SK-N-SH (cell line): ENCODE measurements at regions of chr17 and their contacts with region 1.

Region 1: DNA sequence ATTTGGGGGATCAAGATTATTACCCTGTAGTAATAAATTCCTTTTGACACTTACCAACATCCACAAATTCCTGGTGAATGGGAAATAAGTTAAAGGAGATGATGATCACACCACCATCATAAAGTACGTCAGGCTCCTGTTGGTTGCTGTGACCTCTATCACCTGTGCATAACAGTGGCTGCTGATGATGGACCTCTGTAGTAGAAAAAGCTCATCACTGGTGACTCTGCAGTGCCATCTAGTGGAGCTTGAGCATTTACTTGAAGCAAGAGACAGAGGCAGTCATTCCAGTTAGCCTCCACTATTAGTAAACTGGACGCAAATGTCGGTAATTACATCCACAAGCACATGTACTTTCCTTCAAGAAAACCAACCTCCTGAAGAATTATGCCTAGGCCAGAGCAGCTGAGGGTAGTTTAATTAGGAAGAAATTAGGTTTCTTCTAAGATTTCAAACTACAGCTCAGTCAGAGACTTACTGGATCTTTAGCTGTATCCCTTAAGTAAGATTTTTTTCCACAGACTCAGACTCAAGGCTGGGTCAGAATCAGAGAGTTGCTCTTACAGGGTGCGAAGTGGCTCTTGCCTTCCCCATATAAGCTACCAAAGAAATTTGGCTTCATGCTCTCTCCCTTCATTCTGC is 39.3 kb downstream of the CYB561 start:
- DNase-seq: peak; percentile 82
- H3K4me3 ChIP-seq: no peak overlapping the region
- H3K27ac ChIP-seq: peak overlapping the region; percentile 76 to 84
- H3K4me1 ChIP-seq: peaks cover 17 to 21% of the 10 kb centered on the region in 2 experiments
- H3K27me3 ChIP-seq: no peaks in the 10 kb centered on the region
- CTCF ChIP-seq: peak; percentile 99
- EP300 ChIP-seq: no peak; a peak in 1 of 4 replicates
- RAD21 ChIP-seq: peak; percentile 99

Region 2: GRCh38 chr17:62981928-62982327 is 424.9 kb before region 1 on chr17:
- CTCF ChIA-PET with region 1: interaction called, 14 read pairs
- POLR2A ChIA-PET with region 1: no interaction called
- DNase-seq: no peak
- H3K4me3 ChIP-seq: no peak overlapping the region
- H3K27ac ChIP-seq: no peak overlapping the region
- H3K4me1 ChIP-seq: peaks cover 0 to 10% of the 10 kb centered on the region in 2 experiments; a peak in 1 of 4 replicates
- H3K27me3 ChIP-seq: no peaks in the 10 kb centered on the region
- CTCF ChIP-seq: no peak
- EP300 ChIP-seq: no peak
- RAD21 ChIP-seq: no peak

Region 3: DNA sequence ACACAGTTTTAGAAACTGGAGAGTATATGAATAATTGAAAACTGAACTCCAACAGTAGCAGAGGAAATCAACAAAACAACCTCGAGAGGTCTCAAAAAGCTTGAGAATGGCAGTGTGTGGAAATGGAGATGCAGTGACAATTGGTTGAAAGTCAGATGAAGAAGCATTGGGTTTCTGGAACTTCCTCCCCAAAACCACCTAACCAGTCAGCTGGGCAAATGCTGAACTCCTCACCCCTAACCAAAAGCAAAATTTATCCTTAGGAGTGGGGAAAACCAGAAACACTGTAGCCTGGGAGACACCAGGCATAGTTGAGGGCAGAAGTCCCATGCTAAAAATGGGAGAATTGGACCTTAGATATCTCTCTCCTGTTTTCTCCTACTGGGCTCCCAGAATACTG is 330.8 kb before region 1 on chr17:
- CTCF ChIA-PET with region 1: interaction called, 98 read pairs
- POLR2A ChIA-PET with region 1: no interaction called
- DNase-seq: no peak
- H3K4me3 ChIP-seq: no peak overlapping the region
- H3K27ac ChIP-seq: no peak overlapping the region
- H3K4me1 ChIP-seq: peaks cover 5 to 9% of the 10 kb centered on the region in 2 experiments; a peak in 3 of 4 replicates
- H3K27me3 ChIP-seq: no peaks in the 10 kb centered on the region
- CTCF ChIP-seq: no peak
- EP300 ChIP-seq: no peak
- RAD21 ChIP-seq: no peak

Region 4: GRCh38 chr17:63150994-63151464 is 255.8 kb before region 1 on chr17:
- CTCF ChIA-PET with region 1: interaction called, 17 read pairs
- POLR2A ChIA-PET with region 1: no interaction called
- DNase-seq: peak; percentile 40
- H3K4me3 ChIP-seq: peak overlapping the region; percentile 18 to 36; a peak in 3 of 4 replicates
- H3K27ac ChIP-seq: peak overlapping the region; percentile 95
- H3K4me1 ChIP-seq: peaks cover 43 to 66% of the 10 kb centered on the region in 2 experiments
- H3K27me3 ChIP-seq: no peaks in the 10 kb centered on the region
- CTCF ChIP-seq: no peak
- EP300 ChIP-seq: peak in 1 of 2 experiments; percentile 20; a peak in 1 of 4 replicates
- RAD21 ChIP-seq: no peak

Region 5: GRCh38 chr17:63365366-63366240 is 41.2 kb before region 1 on chr17:
- CTCF ChIA-PET with region 1: interaction called, 10 read pairs
- POLR2A ChIA-PET with region 1: no interaction called
- DNase-seq: no peak
- H3K4me3 ChIP-seq: no peak overlapping the region
- H3K27ac ChIP-seq: peak overlapping the region; percentile 78 to 84
- H3K4me1 ChIP-seq: peaks cover 9 to 46% of the 10 kb centered on the region in 2 experiments
- H3K27me3 ChIP-seq: no peaks in the 10 kb centered on the region
- CTCF ChIP-seq: no peak
- EP300 ChIP-seq: peak; percentile 21 to 85; a peak in 3 of 4 replicates
- RAD21 ChIP-seq: 0 out of 2 replicates have a peak, but pooled peaks have one; percentile 4

Region 6: DNA sequence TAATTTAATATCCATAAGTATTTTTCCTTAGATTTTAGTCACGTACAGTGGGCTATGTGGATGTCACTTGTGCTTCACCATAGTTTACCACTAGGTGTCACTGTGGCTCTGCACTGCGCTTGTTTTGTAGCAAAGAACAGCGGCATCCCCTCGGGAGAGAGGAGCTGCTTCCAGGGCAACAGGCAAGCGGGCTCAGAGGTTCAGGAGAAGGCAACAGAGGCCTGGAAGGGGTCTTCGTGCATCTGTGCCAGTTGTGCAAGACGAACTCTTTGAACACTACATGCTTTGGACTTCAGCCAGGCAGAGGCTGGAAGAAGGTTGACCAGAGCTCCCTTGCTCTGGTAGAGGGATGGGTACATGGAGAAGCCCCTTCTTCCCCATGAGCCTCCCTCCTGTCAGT is 18.7 kb after region 1 on chr17:
- CTCF ChIA-PET with region 1: interaction called, 68 read pairs
- POLR2A ChIA-PET with region 1: no interaction called
- DNase-seq: peak; percentile 90
- H3K4me3 ChIP-seq: no peak overlapping the region; a peak in 1 of 4 replicates
- H3K27ac ChIP-seq: peak overlapping the region in 1 of 2 experiments; percentile 77; a peak in 2 of 4 replicates
- H3K4me1 ChIP-seq: peaks cover 0 to 48% of the 10 kb centered on the region in 2 experiments; a peak in 2 of 4 replicates
- H3K27me3 ChIP-seq: no peaks in the 10 kb centered on the region
- CTCF ChIP-seq: peak; percentile 100
- EP300 ChIP-seq: peak in 1 of 2 experiments; percentile 50; a peak in 1 of 4 replicates
- RAD21 ChIP-seq: peak; percentile 100

Region 7: GRCh38 chr17:63490321-63490720 is 83.5 kb after region 1 on chr17:
- CTCF ChIA-PET with region 1: no interaction called
- POLR2A ChIA-PET with region 1: no interaction called
- DNase-seq: no peak
- H3K4me3 ChIP-seq: no peak overlapping the region
- H3K27ac ChIP-seq: no peak overlapping the region
- H3K4me1 ChIP-seq: peaks cover 0 to 1% of the 10 kb centered on the region in 2 experiments; a peak in 1 of 4 replicates
- H3K27me3 ChIP-seq: no peaks in the 10 kb centered on the region
- CTCF ChIP-seq: no peak
- EP300 ChIP-seq: no peak
- RAD21 ChIP-seq: no peak